ENCODE measurements at regions of chr18 and their contacts with region 1.

Region 1: GRCh38 chr18:55322178-55322735 is 265.7 kb downstream of the TCF4 start:
- DNase-seq: peak; percentile 74
- ATAC-seq: peak; percentile 66
- H3K4me3 ChIP-seq: peak overlapping the region; percentile 91
- H3K27ac ChIP-seq: peak overlapping the region; percentile 84
- H3K4me1 ChIP-seq: no peaks in the 10 kb centered on the region
- H3K27me3 ChIP-seq: no peaks in the 10 kb centered on the region
- CTCF ChIP-seq: no peak
- EP300 ChIP-seq: 0 out of 4 replicates have a peak, but pooled peaks of 1 of the 2 experiments have one; percentile 13
- POLR2A ChIP-seq: peak; percentile 80
- RAD21 ChIP-seq: no peak

Region 2: GRCh38 chr18:54149078-54149697 is 1173.1 kb before region 1 on chr18:
- CTCF ChIA-PET with region 1: no interaction called
- POLR2A ChIA-PET with region 1: no interaction called
- RAD21 ChIA-PET with region 1: no interaction called
- SMC1A ChIA-PET with region 1: no interaction called
- in situ Hi-C with region 1: no loop called
- intact Hi-C with region 1: loop called (anchors 5 kb)
- DNase-seq: peak; percentile 69
- ATAC-seq: peak; percentile 76
- H3K4me3 ChIP-seq: peak overlapping the region; percentile 33
- H3K27ac ChIP-seq: peak overlapping the region; percentile 86
- H3K4me1 ChIP-seq: peaks cover 32% of the 10 kb centered on the region
- H3K27me3 ChIP-seq: no peaks in the 10 kb centered on the region
- CTCF ChIP-seq: no peak
- EP300 ChIP-seq: peak; percentile 79 to 84
- POLR2A ChIP-seq: no peak
- RAD21 ChIP-seq: peak; percentile 25; the same call in 1 of the 2 replicates

Region 3: DNA sequence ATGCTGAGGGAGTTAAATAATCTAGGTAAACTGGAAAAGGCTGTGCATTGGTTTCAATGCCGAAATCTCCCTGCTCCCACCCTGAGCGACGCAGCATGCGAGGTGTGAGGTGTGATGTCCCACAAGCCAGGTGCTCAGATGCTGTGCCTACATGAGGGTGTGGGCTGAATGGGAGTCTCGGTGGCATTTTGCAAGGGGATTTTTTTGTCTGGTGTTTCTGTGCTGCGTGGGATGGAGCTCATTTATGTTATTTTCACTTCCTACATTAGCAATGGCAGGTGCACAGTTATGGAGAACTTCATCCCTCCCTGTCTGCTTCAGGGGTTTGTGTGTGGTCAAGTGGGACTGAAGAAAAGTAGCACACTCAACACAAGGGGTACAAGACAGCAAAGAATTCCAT is 252.8 kb before region 1 on chr18:
- CTCF ChIA-PET with region 1: no interaction called
- POLR2A ChIA-PET with region 1: interaction called, 3 read pairs
- RAD21 ChIA-PET with region 1: interaction called, 3 read pairs
- SMC1A ChIA-PET with region 1: no interaction called
- in situ Hi-C with region 1: no loop called
- intact Hi-C with region 1: loop called (anchors 5 kb)
- DNase-seq: peak; percentile 66
- ATAC-seq: peak; percentile 86
- H3K4me3 ChIP-seq: no peak overlapping the region
- H3K27ac ChIP-seq: peak overlapping the region; percentile 39; the same call in 1 of the 2 replicates
- H3K4me1 ChIP-seq: peaks cover 37% of the 10 kb centered on the region
- H3K27me3 ChIP-seq: no peaks in the 10 kb centered on the region
- CTCF ChIP-seq: no peak
- EP300 ChIP-seq: peak; percentile 93 to 95; a peak in 3 of 4 replicates
- POLR2A ChIP-seq: no peak
- RAD21 ChIP-seq: no peak

Region 4: DNA sequence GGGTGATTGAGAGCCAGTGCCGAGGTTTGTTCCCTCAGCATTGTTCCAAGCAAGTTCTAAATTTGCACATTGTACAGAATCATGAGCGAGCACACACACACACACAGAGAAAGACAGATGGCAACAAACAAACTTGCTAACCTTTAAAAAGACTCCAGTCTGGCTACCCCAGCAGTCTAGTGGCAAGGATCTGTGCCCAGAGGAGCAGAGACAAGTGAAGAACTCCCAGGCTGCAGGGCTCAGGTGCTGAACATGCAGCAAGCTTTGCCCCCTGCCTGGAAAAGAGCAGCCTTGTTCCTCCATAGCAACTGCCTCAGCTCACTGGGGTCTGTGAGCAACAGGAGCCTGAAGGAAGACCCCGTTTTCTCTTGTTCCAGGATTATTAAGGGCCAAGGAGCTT is 193.8 kb before region 1 on chr18:
- CTCF ChIA-PET with region 1: no interaction called
- POLR2A ChIA-PET with region 1: no interaction called
- RAD21 ChIA-PET with region 1: no interaction called
- SMC1A ChIA-PET with region 1: no interaction called
- in situ Hi-C with region 1: no loop called
- intact Hi-C with region 1: no loop called
- DNase-seq: no peak
- ATAC-seq: no peak
- H3K4me3 ChIP-seq: no peak overlapping the region
- H3K27ac ChIP-seq: no peak overlapping the region
- H3K4me1 ChIP-seq: no peaks in the 10 kb centered on the region
- H3K27me3 ChIP-seq: no peaks in the 10 kb centered on the region; a peak in 1 of 4 replicates
- CTCF ChIP-seq: no peak
- EP300 ChIP-seq: no peak
- POLR2A ChIP-seq: no peak
- RAD21 ChIP-seq: no peak

Region 5: GRCh38 chr18:55251254-55251971 is 70.8 kb before region 1 on chr18:
- CTCF ChIA-PET with region 1: interaction called, 7 read pairs
- POLR2A ChIA-PET with region 1: interaction called, 10 read pairs
- RAD21 ChIA-PET with region 1: interaction called, 69 read pairs
- SMC1A ChIA-PET with region 1: interaction called, 50 read pairs
- in situ Hi-C with region 1: loop called (anchors 5 kb)
- intact Hi-C with region 1: loop called (anchors 1 kb)
- DNase-seq: no peak
- ATAC-seq: peak; percentile 23; the same call in 2 of the 3 replicates
- H3K4me3 ChIP-seq: peak overlapping the region; percentile 37; the same call in 1 of the 2 replicates
- H3K27ac ChIP-seq: peak overlapping the region; percentile 71
- H3K4me1 ChIP-seq: peaks cover 57% of the 10 kb centered on the region
- H3K27me3 ChIP-seq: no peaks in the 10 kb centered on the region
- CTCF ChIP-seq: no peak
- EP300 ChIP-seq: no peak
- POLR2A ChIP-seq: no peak
- RAD21 ChIP-seq: no peak

Region 6: DNA sequence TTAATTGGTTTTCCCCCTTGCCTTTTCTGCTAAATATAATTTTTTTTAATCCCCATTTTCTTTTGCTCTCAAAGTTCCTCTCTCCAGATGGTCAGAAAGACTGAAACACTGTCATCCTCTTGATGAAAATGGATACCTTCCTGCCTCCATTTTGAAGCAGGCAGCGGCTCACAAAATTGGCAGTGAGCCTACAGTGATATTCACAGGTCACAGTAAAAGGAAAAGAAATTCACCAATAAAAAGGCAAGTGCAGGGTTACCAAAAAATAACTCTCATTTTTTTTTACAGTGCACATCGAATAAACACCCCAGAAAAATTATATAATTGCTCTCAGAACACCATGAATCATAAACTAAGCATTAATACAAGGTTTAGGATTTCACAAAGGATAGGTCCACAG is 41.8 kb before region 1 on chr18:
- CTCF ChIA-PET with region 1: interaction called, 5 read pairs
- POLR2A ChIA-PET with region 1: interaction called, 7 read pairs
- RAD21 ChIA-PET with region 1: interaction called, 14 read pairs
- SMC1A ChIA-PET with region 1: interaction called, 19 read pairs
- in situ Hi-C with region 1: no loop called
- intact Hi-C with region 1: loop called (anchors 5 kb)
- DNase-seq: no peak
- ATAC-seq: no peak
- H3K4me3 ChIP-seq: no peak overlapping the region
- H3K27ac ChIP-seq: peak overlapping the region; percentile 26; the same call in 1 of the 2 replicates
- H3K4me1 ChIP-seq: peaks cover 10% of the 10 kb centered on the region; the same call in 1 of the 2 replicates
- H3K27me3 ChIP-seq: no peaks in the 10 kb centered on the region
- CTCF ChIP-seq: no peak
- EP300 ChIP-seq: no peak
- POLR2A ChIP-seq: no peak
- RAD21 ChIP-seq: no peak

Region 7: GRCh38 chr18:55300421-55300935 is 21.8 kb before region 1 on chr18:
- CTCF ChIA-PET with region 1: interaction called, 44 read pairs
- POLR2A ChIA-PET with region 1: interaction called, 16 read pairs
- RAD21 ChIA-PET with region 1: interaction called, 45 read pairs
- SMC1A ChIA-PET with region 1: interaction called, 157 read pairs
- in situ Hi-C with region 1: no loop called
- intact Hi-C with region 1: no loop called
- DNase-seq: no peak
- ATAC-seq: no peak
- H3K4me3 ChIP-seq: peak overlapping the region; percentile 18; the same call in 1 of the 2 replicates
- H3K27ac ChIP-seq: no peak overlapping the region
- H3K4me1 ChIP-seq: peaks cover 27% of the 10 kb centered on the region
- H3K27me3 ChIP-seq: no peaks in the 10 kb centered on the region
- CTCF ChIP-seq: no peak
- EP300 ChIP-seq: no peak
- POLR2A ChIP-seq: no peak
- RAD21 ChIP-seq: no peak